Adrenal gland (tissue), 19 donors: ENCODE measurements at regions of chr2 and their contacts with region 1.

Region 1: GRCh38 chr2:26503231-26503880 is 25.4 kb upstream of the OTOF start:
- DNase-seq: peak; percentile 77 to 89 (median 80)
- H3K4me3 ChIP-seq: peak overlapping the region in 1 of 4 donors; percentile 40
- H3K27ac ChIP-seq: peak overlapping the region in 1 of 5 donors; percentile 6
- H3K4me1 ChIP-seq: peaks cover 0 to 11% of the 10 kb centered on the region in 2 donors
- H3K27me3 ChIP-seq: no peaks in the 10 kb centered on the region
- CTCF ChIP-seq: peak; percentile 81 to 95 (median 88)
- POLR2A ChIP-seq: no peak

Region 2: DNA sequence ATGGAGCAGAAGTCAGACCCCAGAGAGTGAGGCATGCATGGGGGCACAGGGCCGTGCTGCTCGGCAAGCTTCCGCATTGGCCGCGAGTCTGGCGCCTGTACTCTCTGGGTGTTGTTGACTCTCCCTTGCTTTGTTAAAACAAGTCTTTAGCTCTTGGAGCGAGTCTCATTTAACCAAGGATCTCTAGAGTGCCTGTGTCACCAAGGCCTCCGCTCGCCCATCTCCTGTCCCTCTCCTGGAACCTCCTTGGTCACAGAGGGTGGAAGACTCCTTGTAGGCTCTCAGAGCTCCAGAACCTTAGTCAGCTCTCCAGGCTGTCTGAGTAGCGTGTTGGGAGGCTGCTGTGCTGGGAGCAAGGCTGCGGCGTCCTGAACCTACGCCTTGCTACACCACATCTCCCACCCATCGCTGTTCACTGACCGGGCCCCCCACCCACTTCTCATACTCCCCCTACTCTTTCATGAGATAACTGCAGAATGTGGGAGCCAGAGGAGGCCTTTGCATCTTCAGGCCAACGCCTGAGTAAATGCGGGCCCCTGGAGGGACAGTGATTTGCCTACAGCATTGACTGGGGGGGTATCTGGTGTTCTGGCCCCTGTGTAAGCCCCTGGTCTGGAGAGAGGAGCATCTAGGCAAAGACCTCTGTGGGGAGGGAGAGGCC is 71.7 kb after region 1 on chr2:
- intact Hi-C with region 1: loop called in 1 of 2 experiments (anchors 2 kb)
- DNase-seq: no peak
- H3K4me3 ChIP-seq: no peak overlapping the region
- H3K27ac ChIP-seq: no peak overlapping the region
- H3K4me1 ChIP-seq: no peaks in the 10 kb centered on the region
- H3K27me3 ChIP-seq: no peaks in the 10 kb centered on the region
- CTCF ChIP-seq: no peak
- POLR2A ChIP-seq: no peak

Region 3: DNA sequence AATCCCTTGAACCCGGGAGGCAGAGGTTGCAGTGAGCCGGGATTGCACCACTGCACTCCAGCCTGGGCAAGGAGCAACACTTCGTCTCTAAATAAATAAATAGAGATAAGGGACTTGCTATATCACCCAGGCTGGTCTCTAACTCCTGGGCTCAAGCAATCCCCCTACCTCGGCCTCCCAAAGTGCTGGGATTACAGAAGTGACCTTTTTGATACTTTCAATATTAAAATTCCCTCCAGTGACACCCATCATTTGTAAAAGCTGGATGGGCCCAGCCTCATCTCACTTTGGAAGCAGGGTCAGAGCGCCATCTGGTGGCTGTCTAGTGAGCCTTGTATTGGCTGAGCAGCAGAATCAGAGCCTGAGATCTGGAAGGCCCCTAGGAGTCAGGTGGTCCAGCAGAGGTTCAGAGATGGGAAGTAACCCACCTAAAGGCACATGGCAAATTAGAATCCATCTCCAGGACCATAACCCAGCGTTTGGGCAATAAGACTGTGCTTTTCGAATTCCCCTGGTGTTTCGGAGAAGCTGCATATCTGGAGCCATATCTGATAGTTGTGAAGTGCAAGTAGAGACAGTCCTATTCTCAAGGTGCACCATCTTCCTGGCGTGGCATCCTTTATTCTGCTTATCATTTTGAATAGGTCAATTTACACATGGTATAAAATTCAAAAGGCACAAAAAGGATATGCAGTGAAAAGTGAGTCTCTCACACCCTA is 242.4 kb after region 1 on chr2:
- intact Hi-C with region 1: loop called in 1 of 2 experiments (anchors 10 kb)
- DNase-seq: peak; percentile 85 to 96 (median 91)
- H3K4me3 ChIP-seq: no peak overlapping the region
- H3K27ac ChIP-seq: no peak overlapping the region
- H3K4me1 ChIP-seq: no peaks in the 10 kb centered on the region
- H3K27me3 ChIP-seq: no peaks in the 10 kb centered on the region
- CTCF ChIP-seq: peak; percentile 92 to 96 (median 94)
- POLR2A ChIP-seq: no peak

Region 4: DNA sequence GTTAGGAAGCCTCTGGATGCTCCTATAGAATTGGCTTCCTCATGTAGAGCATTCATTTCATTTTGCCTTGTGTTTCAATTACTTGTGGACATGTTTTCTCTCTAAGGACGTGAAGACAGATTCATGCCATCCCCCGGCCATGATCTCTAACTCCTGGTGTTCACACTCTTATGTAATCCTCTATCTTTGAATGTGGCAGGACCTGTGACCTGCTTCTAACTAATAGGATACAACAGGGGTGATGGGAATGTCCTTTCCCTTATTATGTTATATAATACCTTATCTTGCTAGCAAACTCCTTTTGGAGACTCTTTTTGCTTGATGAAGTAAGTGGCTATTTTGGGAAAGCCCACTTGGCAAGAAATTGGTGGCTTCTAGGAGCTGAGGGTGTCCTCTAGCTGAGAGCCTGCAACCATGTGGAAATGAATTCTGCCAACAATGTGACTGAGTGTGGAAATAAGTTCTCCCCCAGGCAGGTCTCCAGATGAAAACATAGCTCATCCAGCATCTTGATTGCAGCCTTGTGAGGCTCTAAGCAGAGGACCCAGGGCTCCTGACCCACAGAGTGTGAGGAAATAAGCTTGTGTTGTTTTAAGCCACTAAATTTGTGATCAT is 358.4 kb after region 1 on chr2:
- intact Hi-C with region 1: no loop called
- DNase-seq: no peak
- H3K4me3 ChIP-seq: no peak overlapping the region
- H3K27ac ChIP-seq: no peak overlapping the region
- H3K4me1 ChIP-seq: no peaks in the 10 kb centered on the region
- H3K27me3 ChIP-seq: no peaks in the 10 kb centered on the region
- CTCF ChIP-seq: no peak
- POLR2A ChIP-seq: no peak